Breast epithelium (tissue), 4 donors: ENCODE measurements at regions of chr11 and their contacts with region 1.

Region 1: GRCh38 chr11:126899961-126900748 is 100.4 kb downstream of the KIRREL3 start:
- DNase-seq: no peak
- H3K4me3 ChIP-seq: no peak overlapping the region
- H3K27ac ChIP-seq: no peak overlapping the region
- H3K4me1 ChIP-seq: no peaks in the 10 kb centered on the region
- H3K27me3 ChIP-seq: no peaks in the 10 kb centered on the region
- CTCF ChIP-seq: no peak
- POLR2A ChIP-seq: no peak

Region 2: DNA sequence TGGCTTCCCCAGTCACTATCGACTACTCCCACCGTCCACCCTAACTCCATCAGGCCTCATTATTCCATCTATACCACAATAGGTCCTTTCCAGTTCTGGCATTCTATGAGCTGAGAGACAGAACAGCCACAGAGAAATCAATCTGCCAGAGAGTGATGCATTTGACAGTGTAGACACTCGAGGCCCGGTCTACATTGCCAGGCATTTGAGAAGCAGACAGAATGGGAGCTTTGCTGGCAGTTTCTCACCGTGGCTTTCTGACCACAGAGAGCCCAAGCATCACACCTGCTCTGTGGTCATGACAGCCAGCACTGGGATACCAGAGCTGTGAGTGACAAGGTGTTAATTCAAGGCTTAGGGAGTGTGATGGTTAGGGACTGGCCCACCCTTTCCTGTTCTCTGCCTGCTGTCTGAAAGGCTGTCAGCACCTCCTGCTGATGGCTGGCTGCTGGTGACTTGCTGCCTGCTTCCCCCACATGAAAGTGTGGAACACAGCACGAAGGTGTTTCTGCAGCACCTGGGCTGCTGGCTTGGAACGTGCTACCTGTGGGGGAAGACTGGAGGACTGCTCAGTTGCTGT is 37.4 kb before region 1 on chr11:
- intact Hi-C with region 1: loop called (anchors 1 kb)
- DNase-seq: no peak
- H3K4me3 ChIP-seq: no peak overlapping the region
- H3K27ac ChIP-seq: no peak overlapping the region
- H3K4me1 ChIP-seq: no peaks in the 10 kb centered on the region
- H3K27me3 ChIP-seq: no peaks in the 10 kb centered on the region
- CTCF ChIP-seq: no peak
- POLR2A ChIP-seq: no peak

Region 3: DNA sequence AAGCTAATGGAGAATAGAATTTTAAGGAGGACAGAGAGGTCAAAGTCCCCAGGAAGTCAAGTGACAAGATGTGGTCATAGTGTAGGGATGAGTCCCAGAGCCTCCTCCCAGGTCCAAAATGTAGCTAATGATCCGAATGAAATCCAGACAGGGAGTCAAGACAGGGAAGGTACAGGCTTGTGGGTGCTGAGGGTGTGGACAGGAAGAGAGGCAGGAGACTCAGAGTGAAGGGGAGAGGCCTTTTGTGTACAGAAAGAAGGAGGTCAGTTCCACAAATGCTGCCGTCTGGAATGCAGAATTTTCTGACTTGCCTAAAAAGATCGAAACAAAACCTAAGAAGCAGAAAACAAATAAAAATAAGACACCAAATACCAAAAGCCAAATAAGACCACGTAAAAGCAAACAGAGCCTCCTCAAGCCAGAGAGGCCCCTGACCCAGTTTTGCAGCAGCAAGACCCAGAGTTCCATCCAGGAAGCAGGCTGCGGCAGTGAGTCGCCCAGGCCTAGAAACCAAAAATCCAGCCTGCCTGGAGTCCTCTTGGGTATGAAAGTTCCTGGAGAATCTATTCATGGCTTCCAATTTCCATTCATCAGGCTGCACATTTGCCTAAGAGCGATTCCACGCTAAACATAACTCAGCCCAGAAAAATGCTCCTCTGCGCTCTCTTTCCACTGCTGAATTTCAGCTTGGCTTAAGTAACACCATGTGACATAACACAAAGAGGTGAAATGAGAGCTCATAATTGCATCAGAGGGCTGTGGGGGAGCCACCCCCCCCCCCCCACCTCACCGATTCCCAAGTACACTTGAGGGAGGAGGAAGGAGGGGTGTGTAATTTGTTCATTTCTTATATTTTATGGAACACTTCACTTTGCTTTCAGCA is 29.3 kb after region 1 on chr11:
- intact Hi-C with region 1: no loop called
- DNase-seq: no peak
- H3K4me3 ChIP-seq: no peak overlapping the region
- H3K27ac ChIP-seq: no peak overlapping the region
- H3K4me1 ChIP-seq: no peaks in the 10 kb centered on the region
- H3K27me3 ChIP-seq: no peaks in the 10 kb centered on the region
- CTCF ChIP-seq: no peak
- POLR2A ChIP-seq: no peak